Activated CD4-positive, alpha-beta T cell treated with anti-CD3 and anti-CD28 coated beads for 36 hours (primary cell): ENCODE measurements at regions of chr4 and their contacts with region 1.

Region 1: DNA sequence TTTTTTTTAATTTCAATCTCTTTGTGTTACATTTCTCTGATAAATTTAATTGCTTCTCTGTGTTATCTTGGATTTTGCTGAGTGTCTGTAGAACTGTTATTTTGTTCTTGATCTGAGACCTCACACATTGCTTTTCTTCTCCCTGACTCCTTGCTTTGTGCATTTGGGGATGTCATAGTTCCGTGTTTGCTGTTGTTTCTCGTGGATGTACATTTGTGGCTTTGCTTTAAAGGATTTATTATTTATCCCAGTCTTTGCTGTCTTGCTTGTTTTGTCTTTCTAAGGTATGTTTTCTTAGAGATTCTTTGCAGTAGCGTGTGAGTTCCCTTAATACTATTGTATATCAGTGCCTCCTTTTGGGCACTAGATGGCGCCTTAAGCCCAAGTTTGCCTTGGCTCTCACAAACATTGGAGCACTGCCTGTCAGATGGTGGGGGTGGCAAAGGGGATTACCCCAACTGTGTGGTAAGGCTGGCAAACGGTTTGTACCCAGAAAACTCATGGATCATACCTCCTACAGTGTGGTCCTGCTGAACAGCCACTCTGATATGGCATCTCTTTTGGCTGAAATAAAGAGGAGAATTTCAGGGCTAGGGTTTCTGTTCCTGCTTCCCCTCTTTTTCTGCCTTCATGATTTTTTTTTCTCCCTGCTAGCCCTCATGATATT is 96.4 kb downstream of the PGRMC2 start:
- DNase-seq: peak; percentile 84
- ATAC-seq: peak; percentile 100
- H3K4me3 Mint-ChIP-seq: no peak overlapping the region
- H3K27ac Mint-ChIP-seq: no peak overlapping the region
- H3K4me1 Mint-ChIP-seq: no peaks in the 10 kb centered on the region
- H3K27me3 Mint-ChIP-seq: no peaks in the 10 kb centered on the region

Region 2: GRCh38 chr4:127917151-127917550 is 274.1 kb before region 1 on chr4:
- CTCF ChIA-PET with region 1: no interaction called
- POLR2A ChIA-PET with region 1: no interaction called
- intact Hi-C with region 1: no loop called
- DNase-seq: no peak
- ATAC-seq: no peak
- H3K4me3 Mint-ChIP-seq: no peak overlapping the region
- H3K27ac Mint-ChIP-seq: no peak overlapping the region
- H3K4me1 Mint-ChIP-seq: no peaks in the 10 kb centered on the region
- H3K27me3 Mint-ChIP-seq: no peaks in the 10 kb centered on the region

Region 3: DNA sequence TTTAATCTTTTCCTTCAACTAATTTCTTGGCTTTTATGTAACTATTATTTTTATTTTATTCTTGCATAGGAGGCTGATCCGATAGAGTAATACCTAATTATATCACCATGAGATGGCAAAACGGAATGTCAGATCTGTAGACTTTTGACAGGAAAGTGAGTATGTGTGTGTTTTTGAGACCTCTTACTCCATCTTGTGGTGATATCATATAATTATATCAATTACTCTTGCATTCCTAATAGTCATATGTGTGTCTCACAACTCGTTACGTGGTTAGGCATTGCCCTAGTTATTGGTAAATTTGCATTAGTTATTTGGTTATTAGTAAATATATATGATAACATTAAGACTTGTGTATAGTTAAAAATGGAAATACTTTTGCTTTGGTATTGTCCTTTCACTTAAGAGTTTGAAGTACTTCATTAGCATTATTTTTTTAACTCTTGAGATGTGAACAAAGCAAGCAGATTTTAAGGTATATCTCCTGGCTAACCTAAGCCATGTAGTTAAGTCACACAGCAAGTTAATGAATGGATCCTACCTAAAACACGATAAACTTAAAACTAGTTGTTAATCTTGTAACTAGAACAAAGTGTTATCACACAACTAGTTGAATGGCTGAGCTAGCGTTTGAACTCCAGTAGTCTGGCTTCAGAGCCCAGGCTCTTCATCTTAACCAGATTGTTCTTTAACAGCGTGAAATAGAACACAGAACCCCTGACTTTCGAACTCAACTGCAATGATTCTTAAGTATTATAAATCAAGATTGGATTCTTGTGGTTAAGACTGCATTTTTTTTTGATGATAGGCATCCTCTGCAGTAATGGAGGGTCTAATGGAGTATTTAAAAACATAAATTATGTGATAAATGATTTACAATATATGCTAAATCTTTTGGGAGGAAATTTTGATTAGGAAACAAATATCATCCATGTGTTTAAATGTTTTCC is 29.3 kb after region 1 on chr4:
- CTCF ChIA-PET with region 1: interaction called, 3 read pairs
- POLR2A ChIA-PET with region 1: no interaction called
- intact Hi-C with region 1: loop called (anchors 2 kb)
- DNase-seq: no peak
- ATAC-seq: peak; percentile 30
- H3K4me3 Mint-ChIP-seq: no peak overlapping the region
- H3K27ac Mint-ChIP-seq: no peak overlapping the region
- H3K4me1 Mint-ChIP-seq: no peaks in the 10 kb centered on the region
- H3K27me3 Mint-ChIP-seq: no peaks in the 10 kb centered on the region

Region 4: DNA sequence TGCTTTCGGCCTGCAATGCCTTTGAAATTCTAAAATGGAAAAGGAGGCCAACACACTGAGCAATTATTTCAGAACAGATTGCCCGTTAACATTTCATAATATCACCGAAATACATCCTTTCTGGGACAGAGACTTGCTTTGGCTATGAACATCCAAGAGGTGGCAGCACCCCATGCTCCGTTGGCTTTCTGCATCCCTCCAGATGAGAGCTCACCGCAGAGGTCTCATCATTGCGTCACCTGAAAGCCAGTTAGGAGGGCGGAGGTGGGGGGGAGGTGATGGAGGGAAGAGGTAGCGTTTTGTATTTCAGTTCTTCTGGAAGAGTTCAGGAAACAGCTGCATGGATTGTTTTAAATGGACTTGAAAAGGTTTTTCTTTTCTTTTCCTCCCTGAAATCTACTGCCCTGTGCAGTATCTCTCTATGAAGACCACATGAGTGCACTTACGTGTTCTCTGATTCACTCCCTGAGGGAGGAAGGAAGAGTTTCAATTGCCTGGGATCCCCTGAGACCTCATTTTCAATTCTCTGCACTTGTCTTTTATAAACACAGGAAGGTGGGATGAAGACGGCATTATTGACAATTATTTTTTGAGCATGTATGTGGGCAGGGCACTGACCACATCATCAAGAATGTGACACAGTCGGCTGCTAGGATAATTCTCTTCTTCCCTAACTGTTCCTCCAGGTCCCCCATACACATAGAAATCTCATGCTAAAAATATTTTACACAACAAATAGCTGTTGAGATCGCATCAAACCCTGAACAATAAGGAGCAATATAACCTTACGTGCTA is 263.2 kb after region 1 on chr4:
- CTCF ChIA-PET with region 1: no interaction called
- POLR2A ChIA-PET with region 1: no interaction called
- intact Hi-C with region 1: loop called (anchors 1 to 10 kb)
- DNase-seq: peak; percentile 84
- ATAC-seq: peak; percentile 98
- H3K4me3 Mint-ChIP-seq: no peak overlapping the region
- H3K27ac Mint-ChIP-seq: no peak overlapping the region
- H3K4me1 Mint-ChIP-seq: peaks cover 11% of the 10 kb centered on the region
- H3K27me3 Mint-ChIP-seq: peaks cover 2% of the 10 kb centered on the region

Region 5: DNA sequence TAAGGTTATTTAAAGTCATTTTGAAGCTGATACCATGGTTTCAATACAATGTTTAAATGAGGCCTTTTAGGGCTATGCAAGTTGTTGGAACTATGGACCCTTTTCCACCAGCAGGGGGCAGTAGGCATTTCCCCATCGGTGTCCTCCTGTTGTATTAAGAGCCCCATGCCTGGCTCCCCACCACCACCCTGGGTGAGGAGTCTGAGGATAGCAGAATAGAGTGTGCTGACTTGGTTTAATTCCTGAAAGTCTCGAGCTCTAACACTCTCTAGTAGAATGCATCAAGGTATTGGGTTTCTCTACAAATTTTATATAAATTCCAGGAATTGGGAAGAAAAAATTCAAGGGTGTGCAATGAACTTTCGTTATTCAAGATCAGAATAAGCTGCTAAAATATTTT is 383.5 kb after region 1 on chr4:
- CTCF ChIA-PET with region 1: no interaction called
- POLR2A ChIA-PET with region 1: no interaction called
- intact Hi-C with region 1: loop called in 1 of 2 experiments (anchors 5 kb)
- DNase-seq: peak; percentile 87
- ATAC-seq: peak; percentile 84
- H3K4me3 Mint-ChIP-seq: no peak overlapping the region
- H3K27ac Mint-ChIP-seq: no peak overlapping the region
- H3K4me1 Mint-ChIP-seq: no peaks in the 10 kb centered on the region
- H3K27me3 Mint-ChIP-seq: no peaks in the 10 kb centered on the region

Region 6: GRCh38 chr4:129093191-129093920 is 902.1 kb after region 1 on chr4 and contains the start of gene SCLT1:
- CTCF ChIA-PET with region 1: no interaction called
- POLR2A ChIA-PET with region 1: no interaction called
- intact Hi-C with region 1: loop called in 1 of 2 experiments (anchors 5 kb)
- DNase-seq: peak; percentile 98
- ATAC-seq: peak; percentile 94
- H3K4me3 Mint-ChIP-seq: no peak within 1 kb of the TSS
- H3K27ac Mint-ChIP-seq: peak within 1 kb of the TSS; percentile 35
- H3K4me1 Mint-ChIP-seq: peaks cover 27% of the 10 kb centered on the region
- H3K27me3 Mint-ChIP-seq: no peaks in the 10 kb centered on the region
- total RNA-seq, gene SCLT1: 18.7 to 19.3 TPM